CD4-positive, alpha-beta memory T cell (primary cell): ENCODE measurements at regions of chr6 and their contacts with region 1.

Region 1: GRCh38 chr6:37516076-37516919 is 16.6 kb upstream of the CCDC167 start:
- DNase-seq: peak; percentile 92 to 99 (median 94)
- H3K4me3 ChIP-seq: peak overlapping the region; percentile 49 to 70
- H3K4me3 Mint-ChIP-seq: peak overlapping the region; percentile 84 to 95 (median 92)
- H3K27ac ChIP-seq: peak overlapping the region; percentile 99
- H3K27ac Mint-ChIP-seq: peak overlapping the region; percentile 97 to 100 (median 100)
- H3K4me1 ChIP-seq: peaks cover 91% of the 10 kb centered on the region
- H3K4me1 Mint-ChIP-seq: peaks cover 50 to 94% (median 79%) of the 10 kb centered on the region in 4 donors
- H3K27me3 ChIP-seq: no peaks in the 10 kb centered on the region
- H3K27me3 Mint-ChIP-seq: no peaks in the 10 kb centered on the region

Region 2: DNA sequence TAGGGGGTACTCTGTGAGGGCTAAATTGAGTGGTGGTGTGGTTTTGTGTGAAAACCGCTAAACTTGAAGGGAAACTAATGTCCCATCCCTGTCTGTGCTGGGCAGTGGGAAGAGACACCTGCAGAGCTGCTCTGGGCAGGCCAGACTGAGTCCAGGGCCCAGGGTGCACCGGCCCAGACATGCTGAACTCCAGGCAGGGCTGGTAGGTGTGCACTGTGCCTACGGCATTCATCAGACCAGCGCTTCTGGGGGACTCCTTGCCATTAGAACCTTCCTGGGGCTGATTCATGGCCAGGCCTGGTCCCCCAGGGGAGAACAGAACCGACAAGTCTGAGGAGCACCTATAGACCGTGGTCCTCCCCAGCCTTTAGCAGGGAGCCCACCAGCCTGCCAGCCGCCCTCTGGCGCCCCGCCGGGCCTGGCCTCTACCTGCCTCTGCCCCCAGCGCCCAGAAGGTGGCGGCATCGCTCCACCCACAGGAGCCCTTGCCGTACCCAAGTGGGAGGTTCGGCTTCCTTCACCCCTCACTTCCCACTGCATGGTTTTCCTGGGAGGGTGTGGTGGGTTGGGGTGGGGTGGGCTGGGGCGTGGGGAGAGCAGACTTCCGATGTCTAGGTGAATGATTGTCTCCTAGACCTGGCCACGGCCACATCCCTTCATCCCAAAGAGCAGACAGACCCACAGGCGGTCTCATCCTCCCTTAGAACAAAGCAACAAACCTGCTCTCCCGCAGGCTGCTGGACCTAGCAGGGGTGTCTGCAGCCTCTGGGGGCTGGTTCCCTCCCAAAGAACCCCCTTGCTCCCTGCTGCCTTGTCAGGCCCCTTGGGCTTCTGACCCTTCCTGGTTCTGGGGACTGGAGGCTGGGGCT is 32.1 kb before region 1 on chr6:
- CTCF ChIA-PET with region 1: interaction called, 54 read pairs
- POLR2A ChIA-PET with region 1: interaction called, 977 read pairs
- intact Hi-C with region 1: loop called (anchors 1 kb)
- DNase-seq: peak; percentile 74 to 81 (median 76)
- H3K4me3 ChIP-seq: no peak overlapping the region
- H3K4me3 Mint-ChIP-seq: no peak overlapping the region
- H3K27ac ChIP-seq: peak overlapping the region; percentile 30
- H3K27ac Mint-ChIP-seq: peak overlapping the region; percentile 15 to 97 (median 68)
- H3K4me1 ChIP-seq: peaks cover 34% of the 10 kb centered on the region
- H3K4me1 Mint-ChIP-seq: peaks cover 15 to 32% (median 24%) of the 10 kb centered on the region in 4 donors
- H3K27me3 ChIP-seq: no peaks in the 10 kb centered on the region
- H3K27me3 Mint-ChIP-seq: no peaks in the 10 kb centered on the region

Region 3: GRCh38 chr6:37499433-37500293 is 16.6 kb before region 1 on chr6 and contains the start of gene CCDC167:
- CTCF ChIA-PET with region 1: interaction called, 77 read pairs
- POLR2A ChIA-PET with region 1: interaction called, 977 read pairs
- intact Hi-C with region 1: loop called (anchors 1 kb)
- DNase-seq: peak; percentile 92 to 98 (median 94)
- H3K4me3 ChIP-seq: peak within 1 kb of the TSS; percentile 80 to 90
- H3K4me3 Mint-ChIP-seq: peak within 1 kb of the TSS; percentile 95 to 99 (median 97)
- H3K27ac ChIP-seq: peak within 1 kb of the TSS; percentile 91
- H3K27ac Mint-ChIP-seq: peak within 1 kb of the TSS; percentile 98 to 100 (median 100)
- H3K4me1 ChIP-seq: peaks cover 90% of the 10 kb centered on the region
- H3K4me1 Mint-ChIP-seq: peaks cover 60 to 97% (median 82%) of the 10 kb centered on the region in 4 donors
- H3K27me3 ChIP-seq: no peaks in the 10 kb centered on the region
- H3K27me3 Mint-ChIP-seq: no peaks in the 10 kb centered on the region
- total RNA-seq, gene CCDC167: 25.1 to 27.8 TPM

Region 4: GRCh38 chr6:37547564-37548061 is 31.3 kb after region 1 on chr6:
- CTCF ChIA-PET with region 1: interaction called, 7 read pairs
- POLR2A ChIA-PET with region 1: interaction called, 50 read pairs
- intact Hi-C with region 1: loop called (anchors 2 kb)
- DNase-seq: peak in 3 of 5 donors; percentile 25 to 43 (median 39)
- H3K4me3 ChIP-seq: no peak overlapping the region
- H3K4me3 Mint-ChIP-seq: peak overlapping the region; percentile 8 to 75 (median 68)
- H3K27ac ChIP-seq: peak overlapping the region; percentile 13
- H3K27ac Mint-ChIP-seq: peak overlapping the region; percentile 80 to 97 (median 94)
- H3K4me1 ChIP-seq: peaks cover 28% of the 10 kb centered on the region
- H3K4me1 Mint-ChIP-seq: peaks cover 11 to 53% (median 40%) of the 10 kb centered on the region in 4 donors
- H3K27me3 ChIP-seq: no peaks in the 10 kb centered on the region
- H3K27me3 Mint-ChIP-seq: no peaks in the 10 kb centered on the region

Region 5: DNA sequence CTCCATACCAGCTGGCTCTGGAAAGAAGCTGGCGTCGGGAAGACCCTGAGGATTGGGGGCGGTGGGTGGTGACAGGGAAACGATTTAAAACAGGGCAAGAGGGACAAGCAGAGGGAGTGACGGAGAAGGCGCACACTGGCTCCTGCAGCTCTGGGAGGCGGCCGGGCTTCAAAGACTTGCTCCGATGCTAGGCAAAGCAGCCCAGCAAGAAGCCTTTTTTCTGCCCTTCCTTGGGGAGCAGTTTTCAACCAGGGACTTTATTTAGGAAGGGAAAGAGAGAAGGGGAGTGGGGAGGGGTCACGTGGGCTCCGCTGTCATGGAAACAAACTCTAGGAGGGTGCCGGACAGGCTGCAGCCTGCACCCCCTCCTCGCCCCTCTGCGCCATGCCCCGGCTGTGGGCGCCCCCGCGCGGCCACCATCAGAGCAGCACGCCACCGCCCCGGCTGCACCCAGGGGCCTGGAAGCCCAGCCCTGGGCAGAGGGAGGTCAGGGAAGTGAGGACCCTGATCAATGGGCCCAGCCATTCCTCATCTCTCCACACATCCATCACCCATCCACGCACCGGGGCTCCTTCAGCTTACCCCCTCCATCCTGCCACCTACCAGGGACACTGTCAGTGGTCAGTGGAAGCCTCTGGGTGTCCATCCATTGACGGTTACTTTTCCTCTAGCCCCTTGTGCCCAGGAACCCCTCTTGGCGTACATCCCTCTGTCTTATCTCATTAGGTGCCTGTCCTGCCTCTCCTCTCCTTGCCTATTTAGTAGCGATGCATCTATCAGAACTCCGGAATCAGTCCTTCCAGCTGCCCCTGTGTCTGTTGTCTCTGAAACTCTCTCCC is 50.0 kb after region 1 on chr6:
- CTCF ChIA-PET with region 1: interaction called, 32 read pairs
- POLR2A ChIA-PET with region 1: interaction called, 37 read pairs
- intact Hi-C with region 1: loop called (anchors 1 kb)
- DNase-seq: peak; percentile 64 to 74 (median 69)
- H3K4me3 ChIP-seq: peak overlapping the region in 1 of 2 donors; percentile 43
- H3K4me3 Mint-ChIP-seq: peak overlapping the region; percentile 46 to 77 (median 66)
- H3K27ac ChIP-seq: no peak overlapping the region
- H3K27ac Mint-ChIP-seq: peak overlapping the region in 6 of 7 donors; percentile 31 to 87 (median 70)
- H3K4me1 ChIP-seq: no peaks in the 10 kb centered on the region
- H3K4me1 Mint-ChIP-seq: peaks cover 0 to 10% (median 5%) of the 10 kb centered on the region in 4 donors
- H3K27me3 ChIP-seq: no peaks in the 10 kb centered on the region
- H3K27me3 Mint-ChIP-seq: no peaks in the 10 kb centered on the region